ENCODE measurements at regions of chr1 and their contacts with region 1.

Region 1: GRCh38 chr1:27568300-27569087 is 35.5 kb downstream of the AHDC1 start:
- DNase-seq: peak; percentile 98 to 100 (median 98)
- ATAC-seq: peak; percentile 92
- H3K4me3 ChIP-seq: peak overlapping the region; percentile 15
- H3K27ac ChIP-seq: peak overlapping the region; percentile 47
- H3K4me1 ChIP-seq: peaks cover 71 to 98% of the 10 kb centered on the region in 2 experiments
- H3K27me3 ChIP-seq: no peaks in the 10 kb centered on the region
- CTCF ChIP-seq: peak; percentile 83 to 95 (median 87)
- EP300 ChIP-seq: 0 out of 2 replicates have a peak, but pooled peaks have one; percentile 37
- POLR2A ChIP-seq: no peak; the same call in 1 of the 2 replicates
- RAD21 ChIP-seq: peak; percentile 54 to 56

Region 2: DNA sequence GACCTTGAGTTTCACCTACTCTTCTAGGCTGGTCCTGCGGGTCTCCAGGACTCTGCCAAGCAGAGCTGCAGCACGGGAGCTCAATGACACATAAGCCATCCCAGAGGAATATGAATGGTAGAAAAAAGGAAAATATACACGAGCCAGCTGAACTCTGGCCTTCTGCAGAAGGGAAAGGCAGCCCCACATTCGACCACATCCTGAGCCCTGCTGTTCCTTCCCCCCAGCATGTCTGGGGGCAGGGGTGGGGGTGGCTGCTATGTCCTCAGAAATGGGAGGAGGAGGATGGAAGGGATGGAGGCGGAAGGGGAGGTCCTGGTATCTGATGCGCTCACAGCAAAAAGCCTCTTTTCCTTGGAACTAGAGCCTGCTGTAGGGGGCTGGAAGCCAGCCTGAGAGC is 596.1 kb before region 1 on chr1:
- CTCF ChIA-PET with region 1: no interaction called
- POLR2A ChIA-PET with region 1: no interaction called
- in situ Hi-C with region 1: no loop called
- intact Hi-C with region 1: no loop called
- DNase-seq: no peak
- ATAC-seq: peak; percentile 15; the same call in 1 of the 3 replicates
- H3K4me3 ChIP-seq: no peak overlapping the region
- H3K27ac ChIP-seq: no peak overlapping the region
- H3K4me1 ChIP-seq: peaks cover 3 to 8% of the 10 kb centered on the region in 2 experiments; a peak in 4 of 5 replicates
- H3K27me3 ChIP-seq: peaks cover 0 to 25% of the 10 kb centered on the region in 2 experiments; a peak in 3 of 5 replicates
- CTCF ChIP-seq: no peak
- EP300 ChIP-seq: no peak
- POLR2A ChIP-seq: no peak
- RAD21 ChIP-seq: no peak

Region 3: DNA sequence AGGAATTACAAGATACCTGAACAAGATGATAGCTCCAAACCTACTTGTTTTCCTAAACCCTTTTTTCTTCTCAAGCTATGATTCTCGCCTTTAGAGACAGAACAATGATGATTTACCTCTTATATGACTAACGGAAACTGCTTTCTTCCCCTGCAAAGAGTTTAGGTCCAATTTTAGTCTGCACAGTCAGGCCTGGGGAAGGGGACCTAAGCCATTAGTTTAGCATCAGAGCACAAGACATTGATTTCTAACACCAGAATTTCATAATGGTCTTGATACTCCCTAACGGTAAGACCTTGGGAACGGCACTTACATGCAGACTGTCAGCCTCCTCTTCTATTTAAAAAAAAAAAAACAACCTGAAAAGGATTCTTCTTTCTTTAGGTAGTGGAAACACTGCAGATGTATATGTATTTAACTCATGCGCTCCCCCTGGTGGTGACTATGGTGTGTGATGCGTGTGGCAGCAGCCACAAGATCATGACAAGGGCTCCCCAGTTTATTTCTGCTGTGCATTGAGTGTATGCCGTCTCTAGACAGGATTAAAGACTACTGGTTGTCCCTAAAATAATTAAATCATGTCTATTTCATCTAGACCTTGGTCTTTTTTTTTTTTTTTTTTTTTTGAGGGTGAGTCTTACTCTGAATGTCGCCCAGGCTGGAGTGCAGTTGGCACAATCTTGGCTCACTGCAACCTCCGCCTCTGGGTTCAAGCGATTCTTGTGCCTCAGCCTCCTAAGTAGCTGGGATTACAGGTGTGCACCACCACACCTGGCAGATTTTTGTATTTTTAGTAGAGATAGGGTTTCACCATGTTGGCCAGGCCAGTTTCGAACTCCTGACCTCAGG is 283.8 kb before region 1 on chr1:
- CTCF ChIA-PET with region 1: no interaction called
- POLR2A ChIA-PET with region 1: no interaction called
- in situ Hi-C with region 1: no loop called
- intact Hi-C with region 1: no loop called
- DNase-seq: peak; percentile 87 to 91 (median 90)
- ATAC-seq: peak; percentile 100
- H3K4me3 ChIP-seq: no peak overlapping the region
- H3K27ac ChIP-seq: no peak overlapping the region
- H3K4me1 ChIP-seq: 0 out of 5 replicates have a peak, but pooled peaks cover 0 to 2% of the 10 kb centered on the region in 2 experiments
- H3K27me3 ChIP-seq: no peaks in the 10 kb centered on the region
- CTCF ChIP-seq: peak; percentile 88 to 94 (median 89)
- EP300 ChIP-seq: no peak
- POLR2A ChIP-seq: no peak
- RAD21 ChIP-seq: peak; percentile 82 to 94

Region 4: GRCh38 chr1:27556781-27557595 is 11.5 kb before region 1 on chr1:
- CTCF ChIA-PET with region 1: no interaction called
- POLR2A ChIA-PET with region 1: interaction called, 29 read pairs
- in situ Hi-C with region 1: no loop called
- intact Hi-C with region 1: no loop called
- DNase-seq: peak; percentile 93 to 95 (median 94)
- ATAC-seq: peak; percentile 84
- H3K4me3 ChIP-seq: no peak overlapping the region
- H3K27ac ChIP-seq: peak overlapping the region; percentile 75
- H3K4me1 ChIP-seq: peaks cover 59 to 62% of the 10 kb centered on the region in 2 experiments
- H3K27me3 ChIP-seq: no peaks in the 10 kb centered on the region
- CTCF ChIP-seq: peak; percentile 91 to 93 (median 92)
- EP300 ChIP-seq: no peak; the same call in 1 of the 2 replicates
- POLR2A ChIP-seq: no peak
- RAD21 ChIP-seq: peak; percentile 79 to 89

Region 5: GRCh38 chr1:27583479-27583878 is 15.0 kb after region 1 on chr1:
- CTCF ChIA-PET with region 1: no interaction called
- POLR2A ChIA-PET with region 1: interaction called, 20 read pairs
- in situ Hi-C with region 1: no loop called
- intact Hi-C with region 1: no loop called
- DNase-seq: no peak
- ATAC-seq: no peak
- H3K4me3 ChIP-seq: no peak overlapping the region
- H3K27ac ChIP-seq: no peak overlapping the region
- H3K4me1 ChIP-seq: peaks cover 0 to 9% of the 10 kb centered on the region in 2 experiments; a peak in 3 of 5 replicates
- H3K27me3 ChIP-seq: no peaks in the 10 kb centered on the region
- CTCF ChIP-seq: no peak
- EP300 ChIP-seq: no peak
- POLR2A ChIP-seq: no peak
- RAD21 ChIP-seq: no peak

Region 6: DNA sequence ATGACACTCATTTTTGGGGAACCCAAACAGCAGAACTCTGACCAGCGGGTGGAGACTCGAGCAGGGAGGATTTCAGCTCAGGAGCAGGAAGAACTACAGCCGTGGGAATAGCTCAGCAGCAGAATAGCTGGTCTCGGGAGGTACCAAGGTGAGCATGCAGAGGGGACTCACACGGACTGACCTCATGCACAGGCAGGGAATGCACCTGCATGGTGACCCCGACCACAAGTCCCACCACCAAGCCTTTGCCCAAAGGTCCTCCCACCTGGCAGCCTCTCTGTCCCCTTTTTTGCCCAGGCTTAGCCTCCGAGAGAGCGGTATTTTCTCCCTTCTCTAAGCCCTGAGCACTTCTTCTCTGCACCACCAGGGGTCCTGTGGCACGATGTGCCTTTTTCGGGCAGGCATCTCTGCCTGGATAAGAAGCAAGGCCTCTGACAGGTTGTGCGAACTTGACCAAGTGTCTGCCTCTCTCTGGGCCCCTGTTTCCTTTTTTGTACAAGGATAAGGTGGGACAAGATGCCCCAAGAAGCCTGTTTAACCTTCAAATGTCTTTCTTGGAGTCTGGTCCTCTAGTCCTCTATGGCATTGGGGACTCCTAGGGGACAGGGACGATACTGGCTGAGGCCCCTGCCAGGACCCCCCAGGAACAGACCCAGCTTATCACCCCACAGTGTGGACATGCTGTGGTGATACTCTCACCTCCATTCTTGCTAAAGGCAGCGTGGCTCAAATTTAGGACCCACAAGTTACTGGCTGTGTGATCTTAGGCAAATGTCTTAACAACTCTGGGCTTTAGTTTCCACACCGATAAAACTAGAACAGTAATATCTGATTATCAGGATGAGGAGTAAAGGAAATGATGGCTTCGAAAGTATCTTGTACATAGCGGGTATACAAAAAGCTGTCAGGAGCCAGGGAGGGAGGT is 75.5 kb after region 1 on chr1:
- CTCF ChIA-PET with region 1: no interaction called
- POLR2A ChIA-PET with region 1: no interaction called
- in situ Hi-C with region 1: no loop called
- intact Hi-C with region 1: no loop called
- DNase-seq: peak; percentile 70 to 78 (median 74)
- ATAC-seq: peak; percentile 95
- H3K4me3 ChIP-seq: no peak overlapping the region
- H3K27ac ChIP-seq: no peak overlapping the region
- H3K4me1 ChIP-seq: peaks cover 0 to 8% of the 10 kb centered on the region in 2 experiments; a peak in 3 of 5 replicates
- H3K27me3 ChIP-seq: no peaks in the 10 kb centered on the region
- CTCF ChIP-seq: peak; percentile 80 to 93 (median 84)
- EP300 ChIP-seq: no peak
- POLR2A ChIP-seq: no peak
- RAD21 ChIP-seq: peak; percentile 38 to 69

Region 7: GRCh38 chr1:28078680-28079626 is 510.5 kb after region 1 on chr1:
- CTCF ChIA-PET with region 1: no interaction called
- POLR2A ChIA-PET with region 1: no interaction called
- in situ Hi-C with region 1: no loop called
- intact Hi-C with region 1: no loop called
- DNase-seq: no peak
- ATAC-seq: no peak
- H3K4me3 ChIP-seq: no peak overlapping the region
- H3K27ac ChIP-seq: peak overlapping the region; percentile 7; the same call in 1 of the 3 replicates
- H3K4me1 ChIP-seq: peaks cover 4 to 14% of the 10 kb centered on the region in 2 experiments; a peak in 4 of 5 replicates
- H3K27me3 ChIP-seq: no peaks in the 10 kb centered on the region
- CTCF ChIP-seq: no peak
- EP300 ChIP-seq: no peak
- POLR2A ChIP-seq: no peak
- RAD21 ChIP-seq: no peak